ENCODE measurements at regions of chr1 and their contacts with region 1.

Region 1: GRCh38 chr1:198681831-198682759 is 43.3 kb downstream of the PTPRC start:
- DNase-seq: peak; percentile 91
- H3K4me3 ChIP-seq: peak overlapping the region; percentile 23
- H3K27ac ChIP-seq: peak overlapping the region; percentile 73
- H3K4me1 ChIP-seq: peaks cover 22% of the 10 kb centered on the region
- H3K27me3 ChIP-seq: no peaks in the 10 kb centered on the region
- CTCF ChIP-seq: no peak

Region 2: GRCh38 chr1:197302775-197303174 is 1379.3 kb before region 1 on chr1:
- CTCF ChIA-PET with region 1: no interaction called
- POLR2A ChIA-PET with region 1: no interaction called
- intact Hi-C with region 1: no loop called
- DNase-seq: peak; percentile 49
- H3K4me3 ChIP-seq: no peak overlapping the region
- H3K27ac ChIP-seq: no peak overlapping the region
- H3K4me1 ChIP-seq: peaks cover 6% of the 10 kb centered on the region
- H3K27me3 ChIP-seq: no peaks in the 10 kb centered on the region
- CTCF ChIP-seq: no peak

Region 3: DNA sequence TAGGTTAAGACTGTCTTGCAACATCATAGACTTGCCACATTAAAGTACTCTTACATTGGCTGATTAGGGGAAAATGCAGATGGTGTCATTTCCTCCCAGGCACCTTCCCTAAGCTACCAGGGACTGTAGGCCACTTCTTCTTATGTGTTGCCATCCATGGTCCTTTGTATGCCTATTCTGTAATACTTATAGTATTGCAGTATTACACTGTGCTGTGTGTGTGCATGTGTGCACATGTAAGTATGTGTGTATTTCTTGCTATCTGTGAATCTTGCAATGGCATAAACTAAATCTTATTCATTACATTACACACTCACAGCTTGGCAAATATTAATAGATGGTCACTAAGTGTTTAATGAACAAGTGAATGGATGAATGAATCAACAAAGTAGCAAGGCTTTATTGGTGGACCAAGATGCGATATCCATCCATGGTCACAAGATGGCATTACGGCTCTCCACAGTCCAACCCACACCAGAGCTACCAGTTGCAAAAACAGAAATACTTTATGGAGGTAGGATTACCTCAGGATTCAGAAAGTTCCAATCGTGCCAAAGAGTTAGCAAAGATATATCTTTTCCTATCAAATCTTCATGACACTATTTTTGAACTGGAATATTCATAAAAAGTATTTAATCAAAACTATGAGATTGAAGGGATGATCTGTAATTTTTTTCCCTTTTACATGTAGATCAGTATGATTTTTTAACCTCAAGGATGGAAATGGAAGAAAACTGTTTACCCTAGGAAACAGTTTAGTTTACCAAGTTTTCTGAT is 1067.0 kb before region 1 on chr1:
- CTCF ChIA-PET with region 1: interaction called, 3 read pairs
- POLR2A ChIA-PET with region 1: no interaction called
- intact Hi-C with region 1: loop called (anchors 5 kb)
- DNase-seq: peak; percentile 49
- H3K4me3 ChIP-seq: no peak overlapping the region
- H3K27ac ChIP-seq: no peak overlapping the region
- H3K4me1 ChIP-seq: no peaks in the 10 kb centered on the region
- H3K27me3 ChIP-seq: no peaks in the 10 kb centered on the region
- CTCF ChIP-seq: peak; percentile 71

Region 4: GRCh38 chr1:198088360-198089071 is 593.6 kb before region 1 on chr1:
- CTCF ChIA-PET with region 1: no interaction called
- POLR2A ChIA-PET with region 1: no interaction called
- intact Hi-C with region 1: loop called (anchors 5 kb)
- DNase-seq: peak; percentile 50
- H3K4me3 ChIP-seq: no peak overlapping the region
- H3K27ac ChIP-seq: no peak overlapping the region
- H3K4me1 ChIP-seq: no peaks in the 10 kb centered on the region
- H3K27me3 ChIP-seq: no peaks in the 10 kb centered on the region
- CTCF ChIP-seq: peak; percentile 76

Region 5: DNA sequence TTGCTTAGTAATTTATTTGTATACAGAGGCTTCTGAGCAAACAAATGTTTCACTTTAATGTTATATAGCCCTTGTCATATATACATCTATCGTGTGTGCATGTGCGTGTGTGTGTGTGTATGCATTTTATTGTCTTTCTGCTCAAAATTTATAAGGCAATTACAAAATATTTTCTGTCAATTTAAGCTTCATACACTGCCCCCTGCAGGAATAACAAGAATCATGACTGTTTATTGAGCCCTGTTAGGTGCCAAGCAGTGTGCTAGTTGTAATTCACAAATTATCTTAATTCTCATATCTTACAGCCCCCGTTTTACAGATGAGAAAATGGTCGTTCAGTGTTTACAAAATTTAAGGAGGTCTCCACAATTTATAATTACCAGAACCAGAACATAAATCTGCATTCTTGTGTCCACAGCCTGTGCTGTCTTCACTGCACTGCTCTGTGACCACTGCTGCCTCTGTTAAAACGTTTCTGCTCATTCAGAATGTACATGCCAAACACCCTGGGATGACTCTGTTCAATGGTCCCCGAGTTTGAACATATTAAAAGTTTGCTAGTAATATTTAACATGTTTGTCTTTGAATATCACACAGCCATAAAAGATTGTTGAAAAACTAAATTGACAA is 323.0 kb before region 1 on chr1:
- CTCF ChIA-PET with region 1: no interaction called
- POLR2A ChIA-PET with region 1: no interaction called
- intact Hi-C with region 1: loop called (anchors 10 kb)
- DNase-seq: peak; percentile 35
- H3K4me3 ChIP-seq: no peak overlapping the region
- H3K27ac ChIP-seq: no peak overlapping the region
- H3K4me1 ChIP-seq: no peaks in the 10 kb centered on the region
- H3K27me3 ChIP-seq: no peaks in the 10 kb centered on the region
- CTCF ChIP-seq: peak; percentile 64

Region 6: GRCh38 chr1:198699167-198700015 is 17.3 kb after region 1 on chr1:
- CTCF ChIA-PET with region 1: no interaction called
- POLR2A ChIA-PET with region 1: no interaction called
- intact Hi-C with region 1: no loop called
- DNase-seq: peak; percentile 47
- H3K4me3 ChIP-seq: no peak overlapping the region
- H3K27ac ChIP-seq: no peak overlapping the region
- H3K4me1 ChIP-seq: no peaks in the 10 kb centered on the region
- H3K27me3 ChIP-seq: no peaks in the 10 kb centered on the region
- CTCF ChIP-seq: peak; percentile 84